Activated T-helper 2 cell treated with anti-CD3 and anti-CD28 coated beads, Interferon-gamma antibody, Interleukin-2, Interleukin-4, amounts not matched to agents 10 μg/mL and 5 μg/mL and 100 μg/mL, durations not matched to agents 14 hours and 24 hours and 36 hours (primary cell): ENCODE measurements at regions of chr5 and their contacts with region 1.

Region 1: GRCh38 chr5:137778772-137779564 is 24.8 kb upstream of the HNRNPA0 start:
- DNase-seq: no peak
- H3K4me3 Mint-ChIP-seq: no peak overlapping the region
- H3K27ac Mint-ChIP-seq: no peak overlapping the region
- H3K4me1 Mint-ChIP-seq: no peaks in the 10 kb centered on the region
- H3K27me3 Mint-ChIP-seq: peaks cover 18% of the 10 kb centered on the region

Region 2: GRCh38 chr5:137649228-137649935 is 129.6 kb before region 1 on chr5:
- intact Hi-C with region 1: no loop called
- DNase-seq: no peak
- H3K4me3 Mint-ChIP-seq: no peak overlapping the region
- H3K27ac Mint-ChIP-seq: no peak overlapping the region
- H3K4me1 Mint-ChIP-seq: no peaks in the 10 kb centered on the region
- H3K27me3 Mint-ChIP-seq: no peaks in the 10 kb centered on the region

Region 3: GRCh38 chr5:137735555-137736284 is 43.2 kb before region 1 on chr5 and contains the start of gene KLHL3:
- intact Hi-C with region 1: no loop called
- DNase-seq: peak; percentile 27
- H3K4me3 Mint-ChIP-seq: no peak within 1 kb of the TSS
- H3K27ac Mint-ChIP-seq: no peak within 1 kb of the TSS
- H3K4me1 Mint-ChIP-seq: peaks cover 11% of the 10 kb centered on the region
- H3K27me3 Mint-ChIP-seq: peaks cover 3% of the 10 kb centered on the region
- total RNA-seq, gene KLHL3: 1.7 and 2.3 TPM in 2 replicates

Region 4: DNA sequence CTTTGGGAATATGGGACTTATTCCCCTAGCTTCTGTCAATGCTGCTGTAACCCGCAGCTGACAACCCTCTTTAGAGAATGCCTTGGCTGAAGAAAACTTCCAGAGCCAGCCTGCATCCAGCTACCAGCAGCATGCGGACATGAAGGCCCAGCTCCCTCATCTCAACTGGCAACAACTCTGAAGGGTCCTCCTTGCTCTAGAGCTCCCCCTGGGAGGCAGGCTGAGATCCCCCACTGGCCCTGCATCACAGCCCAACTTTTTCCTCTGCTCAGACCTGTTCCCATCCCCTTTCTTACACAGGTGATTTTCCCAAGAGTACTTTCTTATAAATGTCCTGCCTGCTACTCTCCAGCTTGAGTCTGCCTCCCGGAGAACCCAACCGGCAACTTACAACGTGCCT is 286.1 kb after region 1 on chr5:
- intact Hi-C with region 1: loop called (anchors 5 kb)
- DNase-seq: no peak
- H3K4me3 Mint-ChIP-seq: no peak overlapping the region
- H3K27ac Mint-ChIP-seq: no peak overlapping the region
- H3K4me1 Mint-ChIP-seq: peaks cover 4% of the 10 kb centered on the region
- H3K27me3 Mint-ChIP-seq: no peaks in the 10 kb centered on the region

Region 5: GRCh38 chr5:138128334-138128733 is 349.4 kb after region 1 on chr5:
- intact Hi-C with region 1: loop called (anchors 2 kb)
- DNase-seq: no peak
- H3K4me3 Mint-ChIP-seq: no peak overlapping the region
- H3K27ac Mint-ChIP-seq: no peak overlapping the region
- H3K4me1 Mint-ChIP-seq: no peaks in the 10 kb centered on the region
- H3K27me3 Mint-ChIP-seq: peaks cover 15% of the 10 kb centered on the region